Mammary epithelial cell (primary cell): ENCODE measurements at regions of chr18 and their contacts with region 1.

Region 1: DNA sequence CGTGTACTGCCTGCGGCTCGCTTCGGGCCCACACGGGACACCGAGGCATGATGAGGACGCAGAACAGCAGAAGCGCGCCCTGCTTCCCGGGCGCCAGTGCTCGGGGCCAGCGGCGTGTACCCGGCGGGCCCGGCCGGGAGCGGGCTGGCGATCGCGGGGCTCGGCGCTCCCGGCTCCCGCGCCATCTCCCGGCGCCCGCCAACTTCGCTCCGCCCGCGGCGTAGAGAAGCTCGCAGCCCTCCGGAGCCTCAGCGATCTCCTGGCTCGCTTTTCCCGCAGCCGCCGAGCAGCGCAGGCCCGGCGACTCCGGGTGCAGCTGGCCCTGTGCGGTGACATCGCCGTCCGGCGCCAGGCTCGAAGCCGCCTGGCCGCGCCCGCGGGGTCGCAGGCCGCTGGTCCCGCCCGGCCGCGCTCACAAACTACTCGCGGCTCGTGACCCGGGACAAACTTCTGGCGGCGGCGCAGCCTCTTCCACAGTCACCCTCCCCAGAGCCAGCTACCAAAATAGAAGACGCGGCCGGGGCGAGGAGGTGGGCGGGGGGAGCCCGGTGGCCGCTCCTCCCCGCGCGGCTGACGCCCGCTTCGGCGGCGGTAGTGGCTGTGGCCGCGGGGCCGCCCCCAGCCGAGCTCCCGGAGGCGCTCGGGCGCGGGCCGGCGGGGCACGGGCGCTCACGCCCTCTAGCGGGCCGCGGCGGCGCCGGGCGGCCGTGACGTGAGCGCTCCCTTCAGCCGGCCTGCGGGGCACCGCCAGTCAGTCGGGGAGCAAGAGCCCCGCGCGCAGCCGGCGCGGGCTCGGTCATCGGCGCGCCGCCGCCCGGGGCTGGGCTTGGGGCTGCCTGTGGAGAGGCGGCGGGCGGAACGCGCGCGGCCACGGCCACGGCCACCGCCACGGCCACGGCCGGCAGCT is at the start of gene PTPRM:
- DNase-seq: peak; percentile 75
- H3K4me3 ChIP-seq: peak within 1 kb of the TSS; percentile 78 to 96 (median 79)
- H3K27ac ChIP-seq: peak within 1 kb of the TSS; percentile 54
- H3K4me1 ChIP-seq: peaks cover 3% of the 10 kb centered on the region
- H3K27me3 ChIP-seq: no peaks in the 10 kb centered on the region
- CTCF ChIP-seq: peak; percentile 30 to 31
- total RNA-seq, gene PTPRM: 34.1 to 65.8 TPM

Region 2: DNA sequence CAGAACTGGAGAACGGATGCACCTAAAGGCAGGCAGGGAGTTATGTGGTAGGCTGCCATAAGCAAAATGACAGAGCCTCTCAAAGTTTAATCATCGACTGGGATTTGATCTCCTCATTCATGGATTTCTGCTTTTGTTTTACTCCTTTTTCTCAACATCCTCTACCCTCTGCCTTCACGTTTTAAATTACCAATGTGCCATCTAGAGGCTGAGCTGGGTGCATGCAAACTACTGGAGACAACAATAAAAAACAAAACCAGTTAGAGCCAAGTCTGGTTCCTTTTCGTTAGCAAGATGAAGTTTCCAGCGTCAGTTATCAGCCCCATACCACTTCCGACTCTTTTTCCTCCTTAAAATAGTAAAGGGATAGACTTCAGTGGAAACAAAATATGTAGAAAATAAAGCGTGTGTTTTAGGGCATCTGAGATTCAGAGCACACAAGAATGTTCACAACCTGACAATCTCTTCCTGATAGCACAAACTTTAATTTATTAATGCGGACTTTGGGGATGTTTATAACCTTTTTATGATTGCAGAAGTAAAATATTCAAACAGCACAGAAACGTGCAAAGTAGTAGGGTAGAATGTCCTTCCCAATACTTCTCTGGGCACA is 566.2 kb before region 1 on chr18:
- CTCF ChIA-PET with region 1: no interaction called
- dilution Hi-C with region 1: no loop called
- in situ Hi-C with region 1: no loop called
- intact Hi-C with region 1: no loop called
- DNase-seq: peak; percentile 39
- H3K4me3 ChIP-seq: no peak overlapping the region
- H3K27ac ChIP-seq: no peak overlapping the region
- H3K4me1 ChIP-seq: no peaks in the 10 kb centered on the region
- H3K27me3 ChIP-seq: no peaks in the 10 kb centered on the region
- CTCF ChIP-seq: peak; percentile 55 to 74

Region 3: GRCh38 chr18:7272311-7273049 is 294.3 kb before region 1 on chr18:
- CTCF ChIA-PET with region 1: interaction called, 29 read pairs
- dilution Hi-C with region 1: no loop called
- in situ Hi-C with region 1: loop called (anchors 5 kb)
- intact Hi-C with region 1: loop called (anchors 1 kb)
- DNase-seq: peak; percentile 56
- H3K4me3 ChIP-seq: no peak overlapping the region
- H3K27ac ChIP-seq: no peak overlapping the region
- H3K4me1 ChIP-seq: peaks cover 5% of the 10 kb centered on the region
- H3K27me3 ChIP-seq: no peaks in the 10 kb centered on the region
- CTCF ChIP-seq: peak; percentile 55 to 73

Region 4: GRCh38 chr18:7452331-7452730 is 114.5 kb before region 1 on chr18:
- CTCF ChIA-PET with region 1: no interaction called
- dilution Hi-C with region 1: no loop called
- in situ Hi-C with region 1: no loop called
- intact Hi-C with region 1: loop called (anchors 5 kb)
- DNase-seq: peak; percentile 26
- H3K4me3 ChIP-seq: no peak overlapping the region
- H3K27ac ChIP-seq: no peak overlapping the region
- H3K4me1 ChIP-seq: no peaks in the 10 kb centered on the region
- H3K27me3 ChIP-seq: no peaks in the 10 kb centered on the region
- CTCF ChIP-seq: peak; percentile 73

Region 5: DNA sequence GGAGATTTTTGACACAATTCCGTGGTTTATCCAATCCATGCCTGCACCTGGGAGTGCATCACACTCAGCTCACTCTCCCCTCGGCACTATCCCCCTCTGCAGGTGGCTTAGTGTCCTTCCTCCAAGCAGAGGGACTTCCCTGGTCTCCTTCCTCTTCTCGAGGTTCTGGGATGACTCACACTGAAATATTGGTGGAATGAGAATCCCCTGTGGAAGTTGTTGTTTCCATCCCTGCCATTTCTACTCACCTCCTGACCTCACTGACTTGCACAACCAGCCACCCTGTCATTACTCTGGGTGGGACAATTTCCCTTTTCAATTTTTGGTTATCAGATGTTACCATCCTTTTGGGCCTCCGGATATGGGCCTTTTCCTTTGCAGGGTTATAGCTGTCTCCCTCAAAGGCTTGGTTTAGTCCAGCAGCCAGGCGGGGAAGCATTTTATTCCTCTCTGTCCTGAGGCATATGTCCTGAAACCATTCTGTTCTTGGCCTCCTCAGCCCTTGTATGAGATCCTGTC is 60.2 kb after region 1 on chr18:
- CTCF ChIA-PET with region 1: no interaction called
- dilution Hi-C with region 1: no loop called
- in situ Hi-C with region 1: no loop called
- intact Hi-C with region 1: no loop called
- DNase-seq: peak; percentile 65
- H3K4me3 ChIP-seq: no peak overlapping the region
- H3K27ac ChIP-seq: no peak overlapping the region
- H3K4me1 ChIP-seq: peaks cover 23% of the 10 kb centered on the region
- H3K27me3 ChIP-seq: no peaks in the 10 kb centered on the region
- CTCF ChIP-seq: peak in 1 of 2 donors; percentile 26

Region 6: DNA sequence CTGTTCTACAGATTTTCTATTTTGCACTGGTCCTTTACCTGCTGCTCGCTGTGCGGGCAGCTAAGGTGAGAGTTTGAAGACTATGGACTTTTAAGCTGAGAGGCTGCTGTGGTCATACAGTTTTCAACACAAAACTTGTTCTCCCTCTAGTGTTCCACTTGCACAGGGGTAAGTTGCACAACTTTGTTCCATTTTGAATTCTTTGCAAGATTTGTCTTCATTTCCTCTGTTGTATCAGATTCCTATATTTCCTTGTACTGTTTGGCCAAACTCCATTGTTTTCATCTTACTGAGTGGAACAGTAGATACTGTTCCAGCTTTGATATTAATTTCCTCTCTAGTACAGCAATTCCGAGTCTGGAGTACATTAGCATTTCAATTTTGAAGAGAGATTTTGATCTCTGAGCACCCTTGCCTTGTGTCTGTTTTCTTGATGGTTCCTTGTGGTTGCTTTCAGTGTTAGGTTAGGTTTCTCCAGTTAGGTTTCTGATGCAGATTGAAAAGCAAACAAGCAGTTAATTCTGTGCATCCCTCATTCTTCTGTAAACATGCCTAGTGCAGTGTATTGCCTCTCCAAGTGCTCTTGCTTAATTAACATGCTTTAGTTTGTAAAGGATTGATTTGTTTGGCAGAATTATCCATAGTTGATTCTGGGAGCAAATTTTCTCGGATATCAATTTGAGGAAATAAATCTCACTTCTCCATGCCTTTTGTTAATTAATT is 189.1 kb after region 1 on chr18:
- CTCF ChIA-PET with region 1: interaction called, 14 read pairs
- dilution Hi-C with region 1: no loop called
- in situ Hi-C with region 1: no loop called
- intact Hi-C with region 1: loop called (anchors 1 kb)
- DNase-seq: no peak
- H3K4me3 ChIP-seq: no peak overlapping the region
- H3K27ac ChIP-seq: no peak overlapping the region
- H3K4me1 ChIP-seq: peaks cover 4% of the 10 kb centered on the region
- H3K27me3 ChIP-seq: no peaks in the 10 kb centered on the region
- CTCF ChIP-seq: peak in 1 of 2 donors; percentile 29

Region 7: GRCh38 chr18:7872569-7872968 is 305.7 kb after region 1 on chr18:
- CTCF ChIA-PET with region 1: no interaction called
- dilution Hi-C with region 1: no loop called
- in situ Hi-C with region 1: no loop called
- intact Hi-C with region 1: loop called (anchors 5 kb)
- DNase-seq: peak; percentile 67
- H3K4me3 ChIP-seq: no peak overlapping the region
- H3K27ac ChIP-seq: peak overlapping the region; percentile 91
- H3K4me1 ChIP-seq: peaks cover 26% of the 10 kb centered on the region
- H3K27me3 ChIP-seq: no peaks in the 10 kb centered on the region
- CTCF ChIP-seq: peak; percentile 31 to 60

Region 8: DNA sequence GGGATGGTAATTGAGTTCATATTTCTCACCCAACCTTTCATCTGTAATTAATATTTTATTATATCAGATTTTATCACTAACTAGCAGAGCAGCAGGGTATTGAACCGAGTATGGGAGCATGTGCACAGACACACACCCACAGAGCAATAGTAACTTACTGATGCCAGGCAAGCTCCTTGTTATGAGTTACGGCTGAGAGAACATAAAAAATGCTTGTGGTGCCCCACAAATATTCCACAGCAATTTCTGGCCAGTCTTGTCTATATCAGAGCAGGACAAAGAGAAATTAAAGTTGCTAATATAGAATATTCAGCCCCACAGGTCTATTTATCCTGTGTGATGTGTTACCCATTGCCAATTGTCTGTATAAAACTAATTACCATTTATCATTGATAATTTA is 540.6 kb after region 1 on chr18:
- CTCF ChIA-PET with region 1: no interaction called
- dilution Hi-C with region 1: no loop called
- in situ Hi-C with region 1: no loop called
- intact Hi-C with region 1: loop called (anchors 10 kb)
- DNase-seq: peak; percentile 64
- H3K4me3 ChIP-seq: no peak overlapping the region
- H3K27ac ChIP-seq: peak overlapping the region; percentile 65
- H3K4me1 ChIP-seq: peaks cover 16% of the 10 kb centered on the region
- H3K27me3 ChIP-seq: no peaks in the 10 kb centered on the region
- CTCF ChIP-seq: no peak